Mammary epithelial cell (primary cell): ENCODE measurements at regions of chr1 and their contacts with region 1.

Region 1: DNA sequence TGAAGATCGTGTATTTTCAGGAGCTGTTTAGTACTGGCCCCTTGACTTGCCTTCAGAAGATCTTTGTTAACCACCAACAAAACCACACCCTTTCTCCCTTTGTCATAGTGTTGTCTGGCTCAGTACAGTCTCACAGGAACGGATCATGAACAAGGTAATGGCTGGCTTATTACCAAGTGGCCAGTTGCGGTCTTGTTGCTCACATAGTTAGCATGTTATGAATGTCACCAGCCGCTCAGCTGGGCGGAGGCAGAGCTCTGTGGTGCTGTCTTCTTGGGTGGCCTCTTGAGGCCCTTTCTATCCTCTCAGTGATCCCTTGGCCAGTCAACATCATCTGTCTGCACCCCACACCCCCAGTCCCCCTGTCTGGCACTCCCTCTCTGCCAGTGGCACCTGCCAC is 21.4 kb downstream of the CNIH3 start:
- DNase-seq: peak; percentile 82
- H3K4me3 ChIP-seq: no peak overlapping the region
- H3K27ac ChIP-seq: no peak overlapping the region
- H3K4me1 ChIP-seq: peaks cover 5% of the 10 kb centered on the region
- H3K27me3 ChIP-seq: no peaks in the 10 kb centered on the region
- CTCF ChIP-seq: no peak

Region 2: GRCh38 chr1:224554620-224555259 is 82.8 kb before region 1 on chr1:
- CTCF ChIA-PET with region 1: no interaction called
- dilution Hi-C with region 1: no loop called
- in situ Hi-C with region 1: no loop called
- intact Hi-C with region 1: no loop called
- DNase-seq: no peak
- H3K4me3 ChIP-seq: no peak overlapping the region
- H3K27ac ChIP-seq: no peak overlapping the region
- H3K4me1 ChIP-seq: peaks cover 16% of the 10 kb centered on the region
- H3K27me3 ChIP-seq: no peaks in the 10 kb centered on the region
- CTCF ChIP-seq: no peak

Region 3: DNA sequence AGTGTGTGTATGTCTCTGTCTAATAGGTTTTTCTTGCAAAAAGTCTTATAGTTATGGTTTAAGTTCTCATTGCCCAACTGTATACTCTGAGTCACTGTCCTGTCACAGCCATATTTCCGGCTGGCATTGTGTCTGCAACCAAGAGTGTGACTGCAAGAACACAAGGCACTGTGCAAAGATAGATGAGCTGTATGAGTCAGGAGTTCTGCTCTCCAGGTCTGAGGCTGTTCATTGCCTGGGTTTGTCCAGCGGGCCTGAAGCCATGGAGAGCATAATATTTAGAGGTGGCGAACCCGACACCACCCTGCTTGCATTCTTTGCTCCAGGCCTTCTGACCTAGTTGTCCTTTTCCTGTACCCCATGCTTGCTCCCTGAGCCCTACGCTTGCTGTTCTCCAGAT is 72.3 kb before region 1 on chr1:
- CTCF ChIA-PET with region 1: no interaction called
- dilution Hi-C with region 1: no loop called
- in situ Hi-C with region 1: no loop called
- intact Hi-C with region 1: loop called (anchors 5 kb)
- DNase-seq: peak; percentile 95
- H3K4me3 ChIP-seq: no peak overlapping the region
- H3K27ac ChIP-seq: peak overlapping the region; percentile 93
- H3K4me1 ChIP-seq: peaks cover 45% of the 10 kb centered on the region
- H3K27me3 ChIP-seq: no peaks in the 10 kb centered on the region
- CTCF ChIP-seq: no peak

Region 4: DNA sequence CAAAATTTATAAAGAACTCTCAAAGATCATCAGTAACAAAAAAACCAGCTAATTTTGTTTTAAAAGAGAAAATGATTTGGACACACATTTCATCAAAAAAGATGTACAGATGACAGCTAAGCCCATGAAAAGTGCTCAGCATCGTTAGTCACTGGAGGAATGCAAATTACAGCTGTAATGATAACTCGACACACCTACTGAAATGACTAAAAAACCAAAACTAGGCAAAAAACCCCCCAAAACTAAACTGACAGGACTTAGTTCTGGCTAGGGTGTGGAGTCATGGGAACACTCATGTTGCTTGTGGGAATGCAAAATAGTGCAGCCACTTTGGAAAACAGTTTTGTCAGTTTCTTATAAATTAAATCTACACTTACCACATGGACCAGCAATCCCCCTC is 38.1 kb after region 1 on chr1:
- CTCF ChIA-PET with region 1: no interaction called
- dilution Hi-C with region 1: no loop called
- in situ Hi-C with region 1: no loop called
- intact Hi-C with region 1: no loop called
- DNase-seq: no peak
- H3K4me3 ChIP-seq: no peak overlapping the region
- H3K27ac ChIP-seq: no peak overlapping the region
- H3K4me1 ChIP-seq: no peaks in the 10 kb centered on the region
- H3K27me3 ChIP-seq: no peaks in the 10 kb centered on the region
- CTCF ChIP-seq: no peak

Region 5: DNA sequence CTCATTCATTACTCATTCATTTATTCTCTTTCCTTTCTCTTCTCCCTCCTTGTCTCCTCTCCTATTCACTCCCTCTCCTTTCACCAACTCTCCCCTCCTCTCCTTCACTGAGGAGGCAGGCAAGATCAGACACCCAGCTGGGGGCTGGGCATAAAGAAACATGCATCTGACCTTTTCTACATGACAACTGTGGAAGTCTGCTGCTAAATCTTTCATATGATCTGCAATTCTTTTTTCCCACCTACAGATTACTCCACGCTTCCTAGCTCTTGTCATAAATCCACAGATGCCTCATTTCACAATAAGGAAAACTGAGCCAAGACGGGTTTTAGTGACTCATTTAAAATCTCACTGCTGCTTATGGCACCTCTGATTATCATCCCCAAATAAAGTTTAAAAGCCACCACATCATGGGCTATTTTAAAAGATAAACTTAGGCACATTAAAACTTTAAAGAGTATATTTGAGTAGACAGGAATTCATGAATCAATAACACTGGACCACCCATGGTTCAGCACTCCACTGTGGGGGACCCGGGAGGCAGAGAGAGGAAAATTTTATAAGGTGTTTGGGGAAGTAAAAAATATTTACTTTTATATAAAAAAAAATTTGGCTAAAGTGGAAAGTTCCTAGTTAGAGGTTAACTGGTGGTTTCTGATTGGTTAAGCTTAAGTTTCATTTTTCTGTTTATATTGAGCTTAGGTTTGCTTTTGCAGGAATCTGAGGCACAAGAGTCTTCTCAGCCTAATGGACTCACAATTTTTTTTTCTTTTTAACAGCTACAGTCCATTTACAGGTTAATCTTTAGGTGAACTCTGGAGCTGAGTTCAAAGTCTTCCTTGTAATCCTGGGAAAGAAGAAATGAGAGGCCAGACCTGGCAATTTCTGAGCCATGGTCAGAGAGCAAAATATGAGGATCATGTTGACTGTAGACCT is 236.2 kb after region 1 on chr1:
- CTCF ChIA-PET with region 1: no interaction called
- dilution Hi-C with region 1: no loop called
- in situ Hi-C with region 1: no loop called
- intact Hi-C with region 1: no loop called
- DNase-seq: peak; percentile 30
- H3K4me3 ChIP-seq: no peak overlapping the region
- H3K27ac ChIP-seq: no peak overlapping the region
- H3K4me1 ChIP-seq: peaks cover 4% of the 10 kb centered on the region
- H3K27me3 ChIP-seq: peaks cover 2% of the 10 kb centered on the region
- CTCF ChIP-seq: no peak